BJ (cell line): ENCODE measurements at regions of chr11 and their contacts with region 1.

Region 1: DNA sequence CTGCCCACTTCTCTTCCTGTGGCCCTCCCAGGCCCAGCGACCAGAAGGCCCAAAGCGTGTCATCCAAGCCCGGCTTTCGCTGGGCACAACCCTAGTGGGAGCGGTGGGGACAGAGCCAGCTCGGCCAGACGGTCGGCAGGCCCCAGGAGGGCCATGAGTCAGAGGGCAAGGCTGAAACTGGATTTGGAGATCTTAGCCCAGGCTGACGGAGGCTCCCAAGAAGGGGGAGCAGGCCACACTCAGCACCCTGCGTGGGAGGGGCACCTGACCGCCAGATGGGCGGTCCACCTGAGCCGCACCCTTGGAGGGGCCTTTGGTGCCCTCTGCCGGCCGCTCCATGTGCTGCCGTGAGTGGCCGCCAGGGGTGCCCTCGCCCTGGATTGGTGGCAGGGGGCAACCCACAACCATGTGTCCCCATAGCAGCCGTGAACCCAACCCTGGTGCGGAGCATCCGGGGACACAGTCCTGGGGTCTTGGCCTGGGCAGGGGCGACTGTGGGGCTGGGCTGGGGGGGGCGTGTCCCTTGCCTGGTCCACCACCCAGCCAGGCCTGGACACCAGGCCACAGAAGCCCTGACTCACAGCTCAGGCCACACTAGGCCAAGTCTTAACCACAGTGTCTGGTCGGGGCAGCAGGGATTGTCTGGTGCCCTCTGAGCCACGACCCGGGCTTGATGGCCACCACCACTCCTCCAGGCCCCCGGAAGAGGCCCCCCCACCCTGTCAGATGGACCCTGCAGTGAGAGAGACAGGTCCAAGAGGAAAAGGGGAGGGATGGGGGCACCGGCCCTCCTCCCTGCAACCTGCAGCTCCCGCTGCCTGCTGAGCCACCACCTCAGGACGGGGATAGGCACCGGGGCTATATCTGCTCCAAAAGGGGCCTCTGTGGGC is 19.2 kb upstream of the TALDO1 start:
- DNase-seq: peak; percentile 32
- H3K4me3 ChIP-seq: no peak overlapping the region
- H3K27me3 ChIP-seq: peaks cover 1% of the 10 kb centered on the region
- CTCF ChIP-seq: peak; percentile 100

Region 2: GRCh38 chr11:554824-555472 is 173.2 kb before region 1 on chr11:
- CTCF ChIA-PET with region 1: interaction called, 18 read pairs
- POLR2A ChIA-PET with region 1: no interaction called
- DNase-seq: no peak
- H3K4me3 ChIP-seq: peak overlapping the region; percentile 3; the same call in 1 of the 2 replicates
- H3K27me3 ChIP-seq: peaks cover 15% of the 10 kb centered on the region
- CTCF ChIP-seq: peak; percentile 57

Region 3: DNA sequence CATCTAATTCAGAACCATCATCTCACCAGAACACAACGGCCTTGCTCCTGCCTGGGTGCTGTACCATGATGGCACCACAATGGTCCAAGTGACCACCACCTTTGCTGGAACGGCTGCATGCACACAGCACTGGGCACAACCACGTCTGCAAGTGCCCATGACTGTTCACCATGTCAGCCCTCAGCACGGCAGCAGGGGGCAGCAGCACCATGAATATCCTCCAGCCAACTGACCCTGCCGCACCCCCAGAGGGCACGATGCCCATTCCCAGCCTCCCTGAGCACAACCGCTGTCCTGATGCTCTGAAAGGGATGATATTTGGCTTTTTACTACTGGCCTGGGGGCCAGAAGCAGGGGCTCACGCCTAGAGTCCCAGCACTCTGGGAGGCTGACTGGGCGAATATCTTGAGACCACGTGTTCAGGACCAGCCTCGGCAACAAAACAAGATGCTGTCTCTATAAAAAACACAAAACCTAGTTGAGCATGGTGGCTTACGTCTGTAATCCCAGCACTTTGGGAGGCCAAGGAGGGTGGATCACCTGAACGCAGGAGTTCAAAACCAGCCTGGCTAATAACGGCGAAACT is 65.3 kb before region 1 on chr11:
- CTCF ChIA-PET with region 1: interaction called, 43 read pairs
- POLR2A ChIA-PET with region 1: interaction called, 5 read pairs
- DNase-seq: no peak
- H3K4me3 ChIP-seq: no peak overlapping the region
- H3K27me3 ChIP-seq: no peaks in the 10 kb centered on the region
- CTCF ChIP-seq: peak; percentile 76

Region 4: GRCh38 chr11:695538-696248 is 32.4 kb before region 1 on chr11 and contains the start of gene TMEM80:
- CTCF ChIA-PET with region 1: interaction called, 40 read pairs
- POLR2A ChIA-PET with region 1: interaction called, 7 read pairs
- DNase-seq: peak; percentile 67
- H3K4me3 ChIP-seq: peak within 1 kb of the TSS; percentile 81
- H3K27me3 ChIP-seq: no peaks in the 10 kb centered on the region
- CTCF ChIP-seq: no peak
- polyA plus RNA-seq, gene TMEM80: 19.5 and 21.7 TPM in 2 replicates

Region 5: GRCh38 chr11:706957-707816 is 20.9 kb before region 1 on chr11:
- CTCF ChIA-PET with region 1: interaction called, 17 read pairs
- POLR2A ChIA-PET with region 1: no interaction called
- DNase-seq: no peak
- H3K4me3 ChIP-seq: peak overlapping the region; percentile 75
- H3K27me3 ChIP-seq: no peaks in the 10 kb centered on the region
- CTCF ChIP-seq: peak; percentile 13; the same call in 1 of the 2 replicates

Region 6: GRCh38 chr11:747158-748006 is 19.3 kb after region 1 on chr11 and contains the start of gene TALDO1:
- CTCF ChIA-PET with region 1: interaction called, 20 read pairs
- POLR2A ChIA-PET with region 1: no interaction called
- DNase-seq: peak; percentile 30
- H3K4me3 ChIP-seq: peak within 1 kb of the TSS; percentile 93
- H3K27me3 ChIP-seq: no peaks in the 10 kb centered on the region
- CTCF ChIP-seq: 0 out of 2 replicates have a peak, but pooled peaks have one; percentile 8
- polyA plus RNA-seq, gene TALDO1: 209 and 278 TPM in 2 replicates

Region 7: DNA sequence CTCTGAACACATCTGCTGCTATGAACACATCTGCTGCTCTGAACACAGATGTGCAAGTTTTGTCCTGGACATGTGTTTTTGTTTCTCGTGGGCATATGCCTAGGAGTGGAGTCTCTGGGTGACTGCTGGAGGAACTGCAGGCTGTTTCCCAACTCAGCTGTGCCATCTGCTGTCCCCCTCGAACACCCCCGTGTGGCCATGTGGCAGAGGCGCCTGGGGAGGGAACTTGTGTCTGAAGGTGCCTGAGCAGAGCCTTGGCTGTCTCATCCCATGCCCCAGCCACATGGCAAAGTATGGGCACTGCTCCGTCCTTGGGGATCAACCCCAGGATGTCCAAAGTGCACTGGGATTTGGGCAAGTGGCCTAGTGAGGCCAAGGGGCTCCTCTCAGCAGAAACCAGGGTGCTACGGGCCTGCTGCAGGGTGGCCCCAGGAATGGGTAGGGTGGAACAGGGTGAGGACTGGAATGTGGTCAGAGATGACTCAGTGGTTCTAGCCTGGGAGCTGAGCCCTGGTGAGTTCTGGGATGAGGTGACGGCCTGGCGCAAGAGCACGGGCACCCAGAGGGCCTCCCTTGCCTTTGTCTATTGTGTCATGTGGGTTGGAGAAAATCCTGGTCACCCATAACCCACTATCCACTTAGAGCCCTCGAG is 34.4 kb after region 1 on chr11:
- CTCF ChIA-PET with region 1: interaction called, 19 read pairs
- POLR2A ChIA-PET with region 1: no interaction called
- DNase-seq: no peak
- H3K4me3 ChIP-seq: no peak overlapping the region
- H3K27me3 ChIP-seq: no peaks in the 10 kb centered on the region
- CTCF ChIP-seq: peak; percentile 49